ENCODE measurements at regions of chr17 and their contacts with region 1.

Region 1: DNA sequence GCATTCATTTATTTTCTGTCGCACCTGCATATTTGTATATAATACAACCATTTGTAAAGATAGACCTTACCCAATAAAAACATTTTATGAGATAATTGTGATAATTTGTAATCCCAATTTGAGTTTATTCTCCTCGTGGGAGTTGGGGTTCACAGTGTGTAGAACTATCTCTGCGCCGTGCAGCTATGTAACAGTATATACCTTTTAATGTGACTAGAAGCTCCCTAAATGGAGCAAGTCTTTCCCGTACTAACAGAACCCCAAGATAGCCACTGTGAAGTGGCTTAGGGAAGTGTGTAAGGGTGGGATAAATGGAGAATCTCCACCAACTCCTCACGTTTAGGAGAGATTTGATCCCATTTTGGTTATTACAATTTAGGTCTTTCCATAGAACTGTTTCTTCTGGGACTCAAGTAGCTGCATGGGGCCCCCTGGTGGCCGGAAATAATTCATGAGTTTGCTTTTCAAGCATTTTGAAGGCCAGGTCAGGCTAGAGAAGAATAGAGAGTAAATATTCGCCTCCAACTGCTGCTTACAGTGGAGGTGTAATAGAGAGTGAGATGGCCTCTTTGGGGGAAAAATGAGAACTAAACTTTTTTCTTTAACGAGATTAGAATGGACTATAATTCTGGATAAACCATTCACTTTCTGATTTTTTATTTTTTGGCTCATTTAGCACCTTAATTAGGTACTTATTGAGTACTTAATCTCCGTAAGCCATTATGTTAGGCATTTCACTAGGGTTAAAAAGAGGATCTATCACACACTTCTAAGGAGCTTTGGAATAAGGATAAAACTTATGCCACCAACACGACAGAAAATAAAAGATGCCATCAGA is 4.5 kb downstream of the TMEM100 start:
- DNase-seq: peak; percentile 75 to 84
- ATAC-seq: peak; percentile 43 to 82 (median 72)
- H3K4me3 ChIP-seq: no peak overlapping the region
- H3K27ac ChIP-seq: no peak overlapping the region
- H3K4me1 ChIP-seq: peaks cover 12% of the 10 kb centered on the region
- H3K27me3 ChIP-seq: peaks cover 0 to 3% (median 0%) of the 10 kb centered on the region in 3 donors
- CTCF ChIP-seq: peak; percentile 86

Region 2: DNA sequence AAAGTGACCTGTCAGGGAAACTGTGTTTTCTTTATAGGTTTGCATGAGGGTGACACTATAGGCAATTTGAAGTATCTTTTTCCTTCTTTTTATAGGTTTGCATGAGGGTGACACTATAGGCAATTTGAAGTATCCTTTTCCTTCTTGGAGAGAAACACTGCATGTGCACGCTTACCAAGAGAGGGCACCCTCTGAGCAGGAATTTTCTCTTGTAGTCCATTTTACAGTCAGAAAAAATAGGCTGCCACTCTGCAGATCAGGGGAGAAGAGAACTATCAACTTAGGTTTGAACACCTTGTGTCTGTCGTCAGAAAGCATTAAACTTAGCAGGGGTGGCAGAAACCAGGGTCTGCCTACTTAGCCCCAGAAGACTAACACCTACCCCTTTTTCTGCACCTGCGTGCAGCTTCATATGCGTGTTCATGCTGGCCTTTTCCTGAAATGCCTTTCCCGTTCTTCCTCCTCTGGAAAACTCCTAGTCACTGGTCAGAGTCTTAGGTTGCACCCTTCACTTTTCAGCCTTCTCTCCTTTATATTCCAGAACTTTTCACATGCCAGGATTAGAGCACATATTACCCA is 190.5 kb before region 1 on chr17:
- intact Hi-C with region 1: loop called (anchors 1 to 2 kb)
- DNase-seq: no peak
- ATAC-seq: peak; percentile 40 to 89 (median 78)
- H3K4me3 ChIP-seq: no peak overlapping the region
- H3K27ac ChIP-seq: no peak overlapping the region
- H3K4me1 ChIP-seq: no peaks in the 10 kb centered on the region
- H3K27me3 ChIP-seq: no peaks in the 10 kb centered on the region
- CTCF ChIP-seq: peak; percentile 70

Region 3: GRCh38 chr17:55601874-55602364 is 116.2 kb before region 1 on chr17:
- intact Hi-C with region 1: loop called in 1 of 2 experiments (anchors 5 kb)
- DNase-seq: no peak
- ATAC-seq: no peak
- H3K4me3 ChIP-seq: no peak overlapping the region
- H3K27ac ChIP-seq: no peak overlapping the region
- H3K4me1 ChIP-seq: no peaks in the 10 kb centered on the region
- H3K27me3 ChIP-seq: no peaks in the 10 kb centered on the region
- CTCF ChIP-seq: peak; percentile 49

Region 4: GRCh38 chr17:55750750-55751657 is 32.9 kb after region 1 on chr17 and contains the start of gene PCTP:
- intact Hi-C with region 1: loop called in 1 of 2 experiments (anchors 5 kb)
- DNase-seq: peak; percentile 95 to 97
- ATAC-seq: peak; percentile 99 to 100 (median 100)
- H3K4me3 ChIP-seq: peak within 1 kb of the TSS; percentile 94
- H3K27ac ChIP-seq: peak within 1 kb of the TSS; percentile 93
- H3K4me1 ChIP-seq: peaks cover 15% of the 10 kb centered on the region
- H3K27me3 ChIP-seq: no peaks in the 10 kb centered on the region
- CTCF ChIP-seq: peak; percentile 51
- total RNA-seq, gene PCTP: 9.7 to 24.8 (median 12.2) TPM

Region 5: GRCh38 chr17:55770148-55770870 is 52.2 kb after region 1 on chr17:
- intact Hi-C with region 1: loop called (anchors 2 to 5 kb)
- DNase-seq: no peak
- ATAC-seq: peak; percentile 81 to 88 (median 84)
- H3K4me3 ChIP-seq: no peak overlapping the region
- H3K27ac ChIP-seq: peak overlapping the region; percentile 65
- H3K4me1 ChIP-seq: peaks cover 9% of the 10 kb centered on the region
- H3K27me3 ChIP-seq: no peaks in the 10 kb centered on the region
- CTCF ChIP-seq: peak; percentile 72

Region 6: DNA sequence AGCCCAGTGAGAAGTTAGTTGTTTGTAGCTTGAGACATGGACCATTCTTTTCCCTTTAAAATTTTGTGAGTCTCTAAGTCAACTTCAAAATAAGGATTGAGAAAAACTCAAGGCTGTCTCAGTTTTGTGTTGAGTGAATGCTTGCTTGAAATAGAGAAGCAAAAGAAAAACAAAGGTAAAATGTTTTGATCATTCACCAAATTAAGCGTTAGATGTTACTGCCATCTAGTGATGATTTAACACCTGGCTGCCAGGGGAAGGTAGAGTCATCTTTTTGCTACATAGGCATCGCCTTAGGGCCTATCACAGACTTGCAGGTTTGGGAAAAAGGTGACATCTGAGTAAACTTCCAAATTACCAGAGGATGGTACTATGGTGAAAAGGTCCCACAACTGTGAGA is 107.1 kb after region 1 on chr17:
- intact Hi-C with region 1: loop called in 1 of 2 experiments (anchors 2 kb)
- DNase-seq: no peak
- ATAC-seq: peak in 3 of 4 donors; percentile 48 to 73 (median 57)
- H3K4me3 ChIP-seq: no peak overlapping the region
- H3K27ac ChIP-seq: no peak overlapping the region
- H3K4me1 ChIP-seq: no peaks in the 10 kb centered on the region
- H3K27me3 ChIP-seq: no peaks in the 10 kb centered on the region
- CTCF ChIP-seq: peak; percentile 51